ACHN (cell line): ENCODE measurements at regions of chr17 and their contacts with region 1.

Region 1: DNA sequence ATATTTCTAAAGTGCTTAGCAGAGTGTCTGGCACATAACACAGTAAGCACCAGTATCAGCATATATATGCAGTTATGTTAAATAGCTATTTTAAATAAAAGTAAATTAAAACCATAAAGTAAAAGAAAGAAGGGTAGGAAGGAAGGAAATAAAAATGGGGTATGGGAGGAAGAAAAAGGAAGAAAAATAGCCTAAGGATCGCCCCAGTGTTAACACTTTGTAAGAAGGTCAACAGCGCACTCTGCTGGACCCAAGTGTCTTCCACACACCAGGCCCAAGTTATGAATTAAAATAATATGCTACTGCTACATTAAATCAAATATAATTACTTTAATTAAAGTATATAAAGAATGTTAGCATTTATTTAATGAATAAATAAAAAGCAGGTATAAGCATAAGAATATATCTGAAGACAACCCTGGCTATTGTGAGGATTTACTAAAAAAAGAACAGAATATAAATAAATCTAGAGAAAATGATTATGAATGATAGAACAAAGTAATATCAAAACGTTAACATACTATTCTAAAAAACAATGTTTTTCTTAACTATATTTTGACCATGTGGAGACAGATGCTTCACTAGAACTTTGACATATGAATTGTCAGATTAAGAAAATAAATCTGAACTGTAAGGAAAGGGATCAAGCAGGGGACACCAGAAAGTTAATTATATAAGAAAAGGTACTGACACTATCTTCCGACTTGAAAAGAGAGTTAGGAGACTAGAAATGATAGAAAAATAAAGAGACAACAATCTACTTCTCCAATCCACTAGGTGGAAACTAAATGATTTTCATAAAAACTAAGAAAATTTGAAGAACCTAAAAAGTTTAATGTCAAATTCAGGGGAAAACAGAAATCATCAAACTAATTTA is 25.9 kb downstream of the BRIP1 start:
- DNase-seq: peak; percentile 77

Region 2: DNA sequence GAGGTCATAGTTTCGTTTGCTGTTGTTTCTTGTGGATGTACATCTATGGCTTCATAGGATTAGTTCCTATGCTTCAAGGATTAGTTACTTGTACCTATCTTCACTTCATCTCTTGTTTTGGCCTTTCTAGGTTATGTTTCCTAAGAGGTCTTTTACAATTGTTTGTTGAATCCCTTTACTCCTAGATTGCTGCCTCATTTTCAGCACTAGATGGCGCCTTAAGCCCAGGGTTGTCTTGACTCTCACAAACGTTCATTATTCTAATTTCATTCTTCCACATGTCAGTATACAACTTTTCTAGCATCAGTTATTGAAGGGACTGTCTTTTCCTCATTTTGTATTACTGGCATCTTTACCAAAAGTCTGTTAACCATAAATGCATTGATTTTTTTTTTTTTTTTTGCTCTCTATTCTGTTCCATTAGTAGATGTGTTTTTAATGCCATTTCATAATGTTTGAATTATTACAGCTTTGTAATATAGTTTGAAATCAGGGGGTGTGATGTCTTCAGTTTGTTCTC is 201.4 kb before region 1 on chr17:
- in situ Hi-C with region 1: loop called (anchors 25 kb)
- DNase-seq: peak; percentile 67